ENCODE measurements at regions of chr12 and their contacts with region 1.

Region 1: DNA sequence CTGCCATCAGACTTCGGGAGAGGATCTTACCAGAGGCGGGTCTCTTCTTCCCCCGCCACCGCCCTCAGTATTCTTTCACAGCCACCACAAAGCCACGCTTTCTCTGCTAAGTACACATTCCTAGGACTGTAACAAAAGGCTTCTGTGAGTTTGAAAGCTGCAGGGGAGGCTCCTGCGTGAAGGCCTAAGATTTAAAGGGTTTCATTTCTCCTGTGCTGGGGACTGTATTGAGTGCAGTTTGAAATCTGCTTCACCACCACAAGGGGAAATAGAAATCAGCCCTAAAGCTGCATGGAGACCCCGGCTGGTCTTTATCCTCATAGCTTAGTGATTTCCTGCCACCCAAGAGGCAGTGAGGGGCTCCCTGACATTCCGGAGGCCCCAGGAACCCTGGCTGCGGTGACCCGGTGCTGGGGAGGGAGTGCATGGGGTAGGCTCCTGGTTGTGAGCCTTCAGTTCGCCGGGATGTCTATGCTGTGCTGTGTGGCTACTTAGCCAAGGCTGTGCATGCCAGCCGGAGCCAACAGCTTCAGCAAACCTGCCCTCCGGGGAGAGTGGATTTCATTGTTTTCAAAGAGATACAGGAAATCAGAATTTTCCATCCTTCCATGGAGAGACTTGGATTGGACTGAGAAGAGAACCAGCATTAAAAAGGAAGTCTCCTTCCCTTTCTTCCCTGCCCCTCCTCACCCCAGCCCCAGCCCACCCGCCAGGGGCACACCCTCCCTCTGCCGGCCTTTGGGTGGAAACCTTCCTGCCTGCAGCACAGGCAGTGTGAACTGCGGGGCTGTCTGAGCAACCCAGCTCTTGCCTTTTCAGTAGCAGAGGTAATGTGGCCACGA is 163.3 kb downstream of the ETV6 start:
- DNase-seq: peak; percentile 78
- ATAC-seq: peak; percentile 91
- H3K4me3 ChIP-seq: peak overlapping the region; percentile 63 to 75 (median 73)
- H3K27ac ChIP-seq: no peak overlapping the region
- H3K4me1 ChIP-seq: peaks cover 31% of the 10 kb centered on the region
- H3K27me3 ChIP-seq: no peaks in the 10 kb centered on the region
- CTCF ChIP-seq: peak; percentile 45
- EP300 ChIP-seq: no peak
- POLR2A ChIP-seq: no peak
- RAD21 ChIP-seq: no peak

Region 2: GRCh38 chr12:11437966-11438365 is 374.8 kb before region 1 on chr12:
- CTCF ChIA-PET with region 1: no interaction called
- POLR2A ChIA-PET with region 1: no interaction called
- in situ Hi-C with region 1: no loop called
- intact Hi-C with region 1: no loop called
- DNase-seq: no peak
- ATAC-seq: no peak
- H3K4me3 ChIP-seq: no peak overlapping the region
- H3K27ac ChIP-seq: no peak overlapping the region
- H3K4me1 ChIP-seq: no peaks in the 10 kb centered on the region
- H3K27me3 ChIP-seq: peaks cover 0 to 2% of the 10 kb centered on the region in 2 experiments; a peak in 1 of 5 replicates
- CTCF ChIP-seq: no peak
- EP300 ChIP-seq: no peak
- POLR2A ChIP-seq: no peak
- RAD21 ChIP-seq: no peak

Region 3: DNA sequence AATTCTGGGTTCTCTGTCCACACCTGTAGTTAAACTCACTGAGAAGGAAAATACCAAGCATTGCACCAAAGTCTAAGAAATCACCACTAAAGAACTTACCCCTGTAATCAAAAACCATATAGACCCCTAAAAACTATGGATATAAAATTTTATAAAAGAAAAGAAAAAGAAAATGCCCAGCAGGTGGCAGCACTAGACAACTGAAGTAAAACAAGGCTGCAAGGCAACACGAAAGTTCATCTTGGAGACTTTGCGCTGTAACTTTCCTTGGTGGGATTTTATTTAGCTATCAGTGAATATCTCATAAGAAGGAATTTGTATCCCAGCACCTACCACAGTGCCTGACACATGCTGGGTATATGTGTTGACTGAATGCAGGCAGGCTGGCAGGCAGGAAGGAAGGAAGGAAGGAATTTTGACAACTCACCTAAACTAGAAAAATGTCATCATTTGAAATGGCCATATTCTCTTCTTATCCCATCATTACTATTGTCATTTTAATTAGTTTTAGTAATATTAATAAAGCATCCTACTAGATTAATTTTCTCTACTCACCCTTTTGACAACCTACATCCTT is 231.5 kb before region 1 on chr12:
- CTCF ChIA-PET with region 1: no interaction called
- POLR2A ChIA-PET with region 1: no interaction called
- in situ Hi-C with region 1: no loop called
- intact Hi-C with region 1: loop called (anchors 10 kb)
- DNase-seq: peak; percentile 50
- ATAC-seq: no peak
- H3K4me3 ChIP-seq: no peak overlapping the region
- H3K27ac ChIP-seq: no peak overlapping the region
- H3K4me1 ChIP-seq: no peaks in the 10 kb centered on the region
- H3K27me3 ChIP-seq: no peaks in the 10 kb centered on the region; a peak in 1 of 5 replicates
- CTCF ChIP-seq: peak; percentile 59
- EP300 ChIP-seq: no peak
- POLR2A ChIP-seq: no peak
- RAD21 ChIP-seq: peak; percentile 63

Region 4: DNA sequence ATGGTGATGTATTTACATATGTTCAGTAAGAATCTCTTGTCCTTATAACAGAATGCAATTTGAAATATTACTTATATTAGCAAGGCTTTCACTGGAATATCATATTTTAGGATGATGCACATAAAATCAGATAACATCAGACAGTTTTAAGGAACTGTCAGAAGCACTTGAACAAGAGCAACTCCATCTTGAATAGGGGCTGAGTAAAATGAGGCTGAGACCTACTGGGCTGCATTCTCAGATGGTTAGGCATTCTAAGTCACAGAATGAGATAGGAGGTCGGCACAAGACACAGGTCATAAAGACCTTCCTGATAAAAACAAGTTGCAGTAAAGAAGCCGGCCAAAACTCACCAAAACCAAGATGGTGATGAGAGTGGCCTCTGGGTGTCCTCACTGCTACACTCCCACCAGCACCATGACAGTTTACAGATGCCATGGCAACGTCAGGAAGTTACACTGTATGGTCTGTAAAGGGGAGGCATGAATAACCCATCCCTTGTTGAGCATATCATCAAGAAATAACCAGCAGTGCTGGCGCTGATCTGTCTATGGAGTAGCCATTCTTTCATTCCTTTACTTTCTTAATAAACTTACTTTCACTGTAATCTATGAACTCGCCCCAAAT is 190.9 kb before region 1 on chr12:
- CTCF ChIA-PET with region 1: no interaction called
- POLR2A ChIA-PET with region 1: no interaction called
- in situ Hi-C with region 1: no loop called
- intact Hi-C with region 1: loop called (anchors 5 kb)
- DNase-seq: peak; percentile 29
- ATAC-seq: no peak; the same call in 1 of the 3 replicates
- H3K4me3 ChIP-seq: no peak overlapping the region
- H3K27ac ChIP-seq: no peak overlapping the region
- H3K4me1 ChIP-seq: peaks cover 18% of the 10 kb centered on the region
- H3K27me3 ChIP-seq: no peaks in the 10 kb centered on the region
- CTCF ChIP-seq: peak; percentile 78
- EP300 ChIP-seq: no peak
- POLR2A ChIP-seq: no peak
- RAD21 ChIP-seq: 0 out of 2 replicates have a peak, but pooled peaks have one; percentile 24

Region 5: DNA sequence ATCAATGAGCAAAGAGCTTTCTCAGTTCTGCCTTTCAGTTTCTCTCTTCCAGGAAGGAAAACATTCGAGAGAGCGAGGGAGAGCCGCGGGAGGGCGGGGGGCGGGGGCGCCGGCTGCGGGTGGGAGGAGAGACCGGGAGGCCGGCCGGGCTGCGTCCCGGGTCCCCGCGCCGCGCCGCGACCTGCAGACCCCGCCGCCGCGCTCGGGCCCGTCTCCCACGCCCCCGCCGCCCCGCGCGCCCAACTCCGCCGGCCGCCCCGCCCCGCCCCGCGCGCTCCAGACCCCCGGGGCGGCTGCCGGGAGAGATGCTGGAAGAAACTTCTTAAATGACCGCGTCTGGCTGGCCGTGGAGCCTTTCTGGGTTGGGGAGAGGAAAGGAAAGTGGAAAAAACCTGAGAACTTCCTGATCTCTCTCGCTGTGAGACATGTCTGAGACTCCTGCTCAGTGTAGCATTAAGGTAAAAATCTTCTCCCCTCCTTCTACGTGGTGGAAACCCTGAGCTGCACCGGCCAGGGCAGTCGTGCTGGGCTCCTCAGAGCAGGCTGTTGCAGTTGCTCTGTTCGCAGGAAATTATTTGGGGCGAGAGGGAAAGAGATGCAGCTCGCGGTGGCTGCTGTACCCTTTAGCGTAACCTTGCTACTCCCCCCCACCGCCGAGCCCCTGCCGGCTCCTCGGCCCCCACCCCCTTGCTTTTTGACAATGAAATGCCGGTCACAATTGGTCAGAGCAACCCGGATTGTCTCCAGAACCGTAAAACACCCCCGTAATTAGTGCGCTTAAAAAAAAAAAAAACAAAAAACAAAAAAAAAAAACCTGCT is 162.9 kb before region 1 on chr12:
- CTCF ChIA-PET with region 1: no interaction called
- POLR2A ChIA-PET with region 1: no interaction called
- in situ Hi-C with region 1: no loop called
- intact Hi-C with region 1: loop called (anchors 2 kb)
- DNase-seq: no peak
- ATAC-seq: peak; percentile 54
- H3K4me3 ChIP-seq: peak overlapping the region; percentile 80 to 95 (median 92)
- H3K27ac ChIP-seq: peak overlapping the region; percentile 88
- H3K4me1 ChIP-seq: peaks cover 31% of the 10 kb centered on the region
- H3K27me3 ChIP-seq: no peaks in the 10 kb centered on the region
- CTCF ChIP-seq: no peak
- EP300 ChIP-seq: no peak
- POLR2A ChIP-seq: no peak
- RAD21 ChIP-seq: no peak

Region 6: GRCh38 chr12:11885261-11886038 is 72.6 kb after region 1 on chr12:
- CTCF ChIA-PET with region 1: no interaction called
- POLR2A ChIA-PET with region 1: no interaction called
- in situ Hi-C with region 1: no loop called
- intact Hi-C with region 1: loop called (anchors 5 kb)
- DNase-seq: peak; percentile 94
- ATAC-seq: peak; percentile 91
- H3K4me3 ChIP-seq: peak overlapping the region; percentile 2 to 49 (median 13); a peak in 5 of 6 replicates
- H3K27ac ChIP-seq: peak overlapping the region; percentile 81
- H3K4me1 ChIP-seq: peaks cover 61% of the 10 kb centered on the region
- H3K27me3 ChIP-seq: no peaks in the 10 kb centered on the region
- CTCF ChIP-seq: no peak
- EP300 ChIP-seq: peak in 1 of 2 experiments; percentile 80; a peak in 2 of 4 replicates
- POLR2A ChIP-seq: no peak
- RAD21 ChIP-seq: no peak

Region 7: DNA sequence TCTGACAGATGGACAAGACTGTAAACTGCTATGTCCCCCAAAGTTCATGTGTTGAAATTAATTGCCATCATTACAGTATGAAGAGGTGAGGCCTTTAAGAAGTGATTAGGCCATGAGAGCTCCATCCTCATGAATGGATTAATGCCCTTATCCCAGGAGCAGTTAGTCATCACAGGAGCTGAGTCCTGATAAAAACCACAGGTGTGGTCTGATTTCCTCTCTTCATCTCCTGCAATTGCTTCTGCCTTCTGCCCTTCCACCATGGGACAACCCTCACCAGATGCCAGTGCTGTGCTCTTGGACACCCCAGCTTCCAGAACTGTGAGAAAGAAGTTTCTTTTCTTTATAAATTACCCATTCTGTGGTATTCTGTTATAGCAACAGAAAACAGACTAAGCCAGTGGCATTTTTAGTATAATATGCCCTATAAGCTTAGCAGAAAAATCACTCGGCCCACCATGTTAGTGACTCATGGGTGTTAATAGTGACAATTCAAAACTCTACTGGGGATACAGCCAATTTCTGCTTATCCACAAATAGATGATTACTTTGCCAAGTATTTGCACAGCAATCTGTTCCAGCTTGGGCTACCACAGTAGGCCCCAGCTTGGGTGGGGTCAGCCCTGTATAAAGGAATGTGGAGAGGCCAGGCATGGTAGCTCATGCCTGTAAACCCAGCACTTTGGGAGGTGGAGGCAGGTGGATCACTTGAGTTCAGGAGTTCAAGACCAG is 129.0 kb after region 1 on chr12:
- CTCF ChIA-PET with region 1: no interaction called
- POLR2A ChIA-PET with region 1: no interaction called
- in situ Hi-C with region 1: no loop called
- intact Hi-C with region 1: no loop called
- DNase-seq: no peak
- ATAC-seq: no peak
- H3K4me3 ChIP-seq: no peak overlapping the region
- H3K27ac ChIP-seq: no peak overlapping the region
- H3K4me1 ChIP-seq: no peaks in the 10 kb centered on the region; the same call in 1 of the 2 replicates
- H3K27me3 ChIP-seq: peaks cover 0 to under 1% of the 10 kb centered on the region in 2 experiments; a peak in 1 of 5 replicates
- CTCF ChIP-seq: no peak
- EP300 ChIP-seq: no peak
- POLR2A ChIP-seq: no peak
- RAD21 ChIP-seq: no peak